Right ventricle myocardium inferior (tissue), 1 donor: ENCODE measurements at regions of chr9 and their contacts with region 1.

Region 1: DNA sequence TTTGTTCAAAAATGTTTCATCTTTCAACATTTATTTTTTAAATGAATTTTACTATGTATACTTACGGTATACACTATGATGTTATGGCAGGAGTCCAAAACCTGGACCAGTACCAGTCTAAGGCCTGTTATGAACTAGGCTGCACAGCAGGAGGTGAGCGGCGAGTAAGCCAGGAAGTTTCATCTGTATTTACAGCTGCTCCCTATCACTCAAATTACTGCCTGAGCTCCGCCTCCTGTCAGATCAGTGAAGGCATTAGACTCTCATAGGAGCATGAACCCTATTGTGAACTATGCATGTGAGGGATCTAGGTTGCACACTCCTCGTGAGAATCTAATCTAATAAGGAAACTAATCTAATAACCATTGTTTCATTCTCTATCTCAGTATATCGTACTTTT is 715.5 kb upstream of the PTPRD start:
- DNase-seq: no peak
- ATAC-seq: no peak

Region 2: DNA sequence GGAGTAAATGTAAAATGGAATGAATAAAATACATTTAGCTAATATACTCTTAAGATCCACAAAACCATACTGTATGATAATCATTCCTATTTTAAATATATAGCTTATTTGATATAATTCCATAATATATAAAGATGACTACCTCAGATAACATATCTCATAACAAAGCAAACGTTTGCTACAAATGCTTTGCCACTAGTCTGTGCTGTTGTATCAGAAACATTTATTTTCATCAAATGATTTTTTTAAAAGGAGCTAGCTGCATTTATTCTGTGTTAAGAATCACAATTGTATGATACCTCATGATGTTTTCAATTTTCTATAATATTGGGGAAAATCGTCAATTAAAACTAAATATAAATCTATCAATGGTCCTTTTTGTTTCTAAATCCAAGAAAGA is 1282.7 kb before region 1 on chr9:
- intact Hi-C with region 1: loop called (anchors 10 kb)
- DNase-seq: no peak
- ATAC-seq: no peak

Region 3: GRCh38 chr9:11374926-11375325 is 46.6 kb after region 1 on chr9:
- intact Hi-C with region 1: no loop called
- DNase-seq: no peak
- ATAC-seq: no peak